HCT116 (cell line): ENCODE measurements at regions of chr4 and their contacts with region 1.

Region 1: DNA sequence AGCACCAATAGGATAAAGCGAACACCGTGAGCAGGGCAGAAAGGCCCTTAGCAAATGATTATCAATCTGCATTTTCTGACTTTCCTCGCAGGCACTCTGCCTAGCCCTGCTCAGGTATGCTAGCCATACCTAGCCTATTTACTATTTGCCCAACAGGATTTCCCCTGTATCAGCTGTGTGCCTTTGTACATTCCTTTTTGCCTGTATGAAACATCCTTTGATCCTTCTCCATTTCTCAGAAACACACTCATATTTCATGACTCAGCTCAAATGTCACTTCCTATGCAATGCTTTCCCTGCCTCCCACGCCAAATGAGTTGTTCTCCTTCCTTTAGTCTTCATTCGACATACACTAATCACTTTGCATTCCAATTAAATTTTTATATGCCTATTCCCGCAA is 37.2 kb downstream of the PCDH7 start:
- DNase-seq: peak; percentile 98
- ATAC-seq: peak; percentile 82
- H3K4me3 ChIP-seq: no peak overlapping the region
- H3K27ac ChIP-seq: peak overlapping the region; percentile 100
- H3K4me1 ChIP-seq: peaks cover 68 to 97% of the 10 kb centered on the region in 2 experiments
- H3K27me3 ChIP-seq: no peaks in the 10 kb centered on the region
- CTCF ChIP-seq: no peak
- POLR2A ChIP-seq: no peak
- RAD21 ChIP-seq: no peak

Region 2: GRCh38 chr4:30744957-30745640 is 12.3 kb before region 1 on chr4:
- CTCF ChIA-PET with region 1: no interaction called
- POLR2A ChIA-PET with region 1: interaction called, 11 read pairs
- RAD21 ChIA-PET with region 1: no interaction called
- intact Hi-C with region 1: no loop called
- DNase-seq: no peak
- ATAC-seq: peak; percentile 52
- H3K4me3 ChIP-seq: no peak overlapping the region
- H3K27ac ChIP-seq: peak overlapping the region; percentile 100
- H3K4me1 ChIP-seq: peaks cover 45 to 68% of the 10 kb centered on the region in 2 experiments
- H3K27me3 ChIP-seq: no peaks in the 10 kb centered on the region
- CTCF ChIP-seq: no peak
- POLR2A ChIP-seq: no peak
- RAD21 ChIP-seq: no peak

Region 3: DNA sequence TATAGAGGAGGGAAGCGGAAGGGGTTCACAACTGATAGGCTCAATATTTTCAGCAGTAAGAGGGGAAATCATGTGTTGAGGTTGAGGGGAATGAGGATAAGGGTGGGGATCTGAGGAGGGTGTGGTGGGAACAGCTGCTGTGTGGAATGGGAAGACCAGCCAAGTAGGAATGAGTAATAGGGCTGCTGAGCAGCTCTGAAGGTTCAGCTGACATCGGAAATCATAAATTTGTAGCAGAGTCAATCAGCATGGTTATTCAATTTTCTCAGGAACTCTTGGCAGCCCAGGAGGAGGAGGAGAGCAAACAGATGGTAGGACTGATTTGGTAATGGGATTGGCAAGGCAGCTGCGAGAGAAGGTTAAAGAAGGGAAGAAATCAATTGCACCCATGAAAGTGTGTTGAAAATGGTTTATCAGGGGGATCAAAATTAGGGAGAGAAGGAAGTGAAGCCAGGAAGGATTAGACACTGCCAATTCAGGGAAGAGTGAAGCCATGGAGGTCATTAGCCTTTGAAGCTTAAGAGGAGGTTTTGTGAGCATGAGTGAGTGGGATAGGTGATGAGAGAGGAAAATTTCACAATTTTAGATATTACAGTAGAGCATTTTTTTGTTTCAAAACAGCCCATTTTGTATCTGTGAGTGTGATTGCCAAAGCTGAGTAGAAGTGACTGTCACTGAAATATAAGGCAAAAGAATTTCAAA is 45.4 kb after region 1 on chr4:
- CTCF ChIA-PET with region 1: no interaction called
- POLR2A ChIA-PET with region 1: interaction called, 6 read pairs
- RAD21 ChIA-PET with region 1: no interaction called
- intact Hi-C with region 1: loop called (anchors 5 kb)
- DNase-seq: peak; percentile 88
- ATAC-seq: peak; percentile 89
- H3K4me3 ChIP-seq: peak overlapping the region in 1 of 2 experiments; percentile 38; a peak in 2 of 4 replicates
- H3K27ac ChIP-seq: peak overlapping the region; percentile 100
- H3K4me1 ChIP-seq: peaks cover 53 to 74% of the 10 kb centered on the region in 2 experiments
- H3K27me3 ChIP-seq: no peaks in the 10 kb centered on the region
- CTCF ChIP-seq: no peak
- POLR2A ChIP-seq: peak; percentile 13
- RAD21 ChIP-seq: peak; percentile 13; the same call in 1 of the 2 replicates

Region 4: DNA sequence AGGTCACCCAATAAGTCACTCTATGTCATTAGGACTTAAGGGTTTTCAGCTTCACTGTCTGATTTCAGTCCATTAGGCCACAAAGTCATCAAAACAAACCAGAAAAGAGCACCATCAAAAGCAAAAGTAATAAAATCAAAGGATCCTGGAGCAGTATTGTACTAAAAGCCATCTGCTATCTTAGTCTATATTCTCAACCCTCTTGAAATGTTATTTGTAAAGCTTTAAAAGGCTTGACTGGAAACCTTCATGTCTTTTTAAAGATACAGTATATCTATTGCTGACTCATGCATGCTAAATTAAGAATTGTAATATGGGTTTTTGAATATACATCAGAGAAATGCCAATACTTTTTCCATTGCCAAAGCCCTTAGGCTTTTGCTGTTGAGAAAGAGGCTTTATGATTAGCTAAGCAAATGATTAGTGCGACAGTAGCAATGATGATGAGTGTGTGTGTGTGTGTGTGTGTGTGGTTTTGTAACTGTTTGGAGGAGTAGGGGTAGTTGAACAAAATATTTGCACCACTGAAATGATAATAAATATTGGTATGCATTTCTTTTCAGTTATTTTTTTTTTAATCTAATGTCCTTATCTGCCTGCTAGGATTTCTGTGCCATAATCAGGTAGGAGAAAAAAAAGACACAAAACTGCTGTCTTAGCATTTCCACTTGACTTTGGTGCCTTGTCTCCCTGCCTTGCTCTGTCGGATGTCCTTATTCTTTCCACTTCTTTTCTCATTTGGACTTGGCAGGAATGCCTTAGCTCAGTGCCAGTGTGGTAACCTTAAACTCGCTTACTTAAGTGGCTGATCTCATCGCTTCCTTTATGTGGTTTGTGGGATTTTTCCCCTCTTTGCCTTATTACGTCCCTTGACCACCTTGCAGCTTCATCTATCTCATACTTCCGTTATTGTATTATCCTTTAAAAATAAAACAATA is 82.5 kb after region 1 on chr4:
- CTCF ChIA-PET with region 1: no interaction called
- POLR2A ChIA-PET with region 1: interaction called, 17 read pairs
- RAD21 ChIA-PET with region 1: interaction called in 1 of 2 experiments, 4 read pairs
- intact Hi-C with region 1: no loop called
- DNase-seq: peak; percentile 97
- ATAC-seq: peak; percentile 77
- H3K4me3 ChIP-seq: peak overlapping the region in 1 of 2 experiments; percentile 18; a peak in 1 of 4 replicates
- H3K27ac ChIP-seq: peak overlapping the region; percentile 100
- H3K4me1 ChIP-seq: peaks cover 83 to 99% of the 10 kb centered on the region in 2 experiments
- H3K27me3 ChIP-seq: no peaks in the 10 kb centered on the region
- CTCF ChIP-seq: no peak
- POLR2A ChIP-seq: no peak
- RAD21 ChIP-seq: peak; percentile 22; the same call in 1 of the 2 replicates

Region 5: DNA sequence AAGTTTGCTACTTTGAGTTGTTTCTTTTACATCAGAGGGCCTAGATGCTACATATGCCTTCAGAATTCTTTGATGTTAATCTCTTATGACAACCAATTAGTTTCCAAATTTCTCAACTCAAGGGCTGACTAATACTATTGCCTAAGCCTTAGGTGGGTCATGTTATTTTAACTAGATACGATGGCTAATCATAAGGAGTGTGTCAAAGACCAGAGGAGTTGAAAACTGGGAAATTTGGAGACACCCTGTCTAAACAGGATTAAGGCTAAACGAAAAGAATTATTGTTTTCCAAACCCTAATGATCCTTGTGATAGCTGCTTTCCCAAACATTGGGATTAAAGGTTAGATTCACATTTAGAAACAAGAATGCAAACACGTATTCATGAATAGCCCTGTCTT is 191.3 kb after region 1 on chr4:
- CTCF ChIA-PET with region 1: no interaction called
- POLR2A ChIA-PET with region 1: interaction called, 4 read pairs
- RAD21 ChIA-PET with region 1: no interaction called
- intact Hi-C with region 1: loop called (anchors 2 kb)
- DNase-seq: peak; percentile 90
- ATAC-seq: peak; percentile 58
- H3K4me3 ChIP-seq: no peak overlapping the region
- H3K27ac ChIP-seq: peak overlapping the region; percentile 94
- H3K4me1 ChIP-seq: peaks cover 77 to 99% of the 10 kb centered on the region in 2 experiments
- H3K27me3 ChIP-seq: no peaks in the 10 kb centered on the region
- CTCF ChIP-seq: no peak
- POLR2A ChIP-seq: no peak
- RAD21 ChIP-seq: peak; percentile 47

Region 6: GRCh38 chr4:31445526-31445925 is 688.2 kb after region 1 on chr4:
- CTCF ChIA-PET with region 1: no interaction called
- POLR2A ChIA-PET with region 1: no interaction called
- RAD21 ChIA-PET with region 1: no interaction called
- intact Hi-C with region 1: no loop called
- DNase-seq: no peak
- ATAC-seq: no peak
- H3K4me3 ChIP-seq: no peak overlapping the region
- H3K27ac ChIP-seq: no peak overlapping the region
- H3K4me1 ChIP-seq: no peaks in the 10 kb centered on the region
- H3K27me3 ChIP-seq: no peaks in the 10 kb centered on the region
- CTCF ChIP-seq: no peak
- POLR2A ChIP-seq: no peak
- RAD21 ChIP-seq: no peak